ENCODE measurements at regions of chr15 and their contacts with region 1.

Region 1: DNA sequence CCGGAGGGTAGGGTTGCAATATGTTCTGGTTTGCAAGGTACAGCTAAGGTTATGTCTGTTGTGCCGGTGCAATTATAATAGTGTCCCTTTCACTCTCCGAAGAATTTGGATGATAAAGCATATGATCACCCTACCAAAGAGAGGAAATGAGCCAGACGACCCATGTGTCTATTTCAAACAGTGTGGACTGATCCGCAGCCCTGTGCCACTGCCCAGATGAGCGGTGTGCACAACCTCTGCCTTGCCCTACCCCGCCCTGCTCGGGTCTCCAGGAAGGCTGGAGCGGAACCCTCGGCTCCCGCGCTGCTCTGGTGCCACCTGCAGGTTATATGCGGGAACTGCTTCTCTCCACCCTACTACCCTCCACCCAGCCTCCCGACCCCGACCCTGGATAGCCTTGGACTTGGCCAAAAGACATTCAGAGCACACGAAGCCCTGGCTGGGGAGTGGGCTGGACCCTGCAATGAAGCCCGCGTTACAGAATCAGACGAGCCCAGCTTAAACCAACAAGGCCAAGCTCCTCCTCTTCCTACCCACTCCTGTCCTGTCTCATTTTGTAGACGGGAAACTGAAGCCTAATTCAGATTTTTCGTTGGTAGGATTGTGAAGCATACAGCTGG is 68.4 kb upstream of the CHRNB4 start:
- DNase-seq: peak; percentile 68
- H3K4me3 Mint-ChIP-seq: peak overlapping the region; percentile 40
- H3K27ac Mint-ChIP-seq: no peak overlapping the region
- H3K4me1 Mint-ChIP-seq: no peaks in the 10 kb centered on the region
- H3K27me3 Mint-ChIP-seq: peaks cover 40% of the 10 kb centered on the region
- CTCF ChIP-seq: peak; percentile 82

Region 2: GRCh38 chr15:78308422-78309032 is 400.8 kb before region 1 on chr15:
- CTCF ChIA-PET with region 1: no interaction called
- POLR2A ChIA-PET with region 1: no interaction called
- intact Hi-C with region 1: loop called (anchors 5 kb)
- DNase-seq: peak; percentile 68
- H3K4me3 Mint-ChIP-seq: no peak overlapping the region
- H3K27ac Mint-ChIP-seq: no peak overlapping the region
- H3K4me1 Mint-ChIP-seq: no peaks in the 10 kb centered on the region
- H3K27me3 Mint-ChIP-seq: no peaks in the 10 kb centered on the region
- CTCF ChIP-seq: peak; percentile 90

Region 3: GRCh38 chr15:78481917-78482316 is 227.5 kb before region 1 on chr15:
- CTCF ChIA-PET with region 1: interaction called, 4 read pairs
- POLR2A ChIA-PET with region 1: no interaction called
- intact Hi-C with region 1: loop called (anchors 10 kb)
- DNase-seq: no peak
- H3K4me3 Mint-ChIP-seq: no peak overlapping the region
- H3K27ac Mint-ChIP-seq: no peak overlapping the region
- H3K4me1 Mint-ChIP-seq: no peaks in the 10 kb centered on the region
- H3K27me3 Mint-ChIP-seq: no peaks in the 10 kb centered on the region
- CTCF ChIP-seq: no peak

Region 4: GRCh38 chr15:78618490-78618934 is 90.9 kb before region 1 on chr15:
- CTCF ChIA-PET with region 1: interaction called, 21 read pairs
- POLR2A ChIA-PET with region 1: no interaction called
- intact Hi-C with region 1: loop called (anchors 1 kb)
- DNase-seq: peak; percentile 84
- H3K4me3 Mint-ChIP-seq: no peak overlapping the region
- H3K27ac Mint-ChIP-seq: no peak overlapping the region
- H3K4me1 Mint-ChIP-seq: no peaks in the 10 kb centered on the region
- H3K27me3 Mint-ChIP-seq: peaks cover 31% of the 10 kb centered on the region
- CTCF ChIP-seq: peak; percentile 76

Region 5: GRCh38 chr15:78638658-78639314 is 70.6 kb before region 1 on chr15:
- CTCF ChIA-PET with region 1: interaction called, 88 read pairs
- POLR2A ChIA-PET with region 1: no interaction called
- intact Hi-C with region 1: loop called (anchors 1 kb)
- DNase-seq: peak; percentile 72
- H3K4me3 Mint-ChIP-seq: no peak overlapping the region
- H3K27ac Mint-ChIP-seq: no peak overlapping the region
- H3K4me1 Mint-ChIP-seq: no peaks in the 10 kb centered on the region
- H3K27me3 Mint-ChIP-seq: no peaks in the 10 kb centered on the region
- CTCF ChIP-seq: peak; percentile 63

Region 6: GRCh38 chr15:78651930-78652615 is 57.3 kb before region 1 on chr15:
- CTCF ChIA-PET with region 1: interaction called, 10 read pairs
- POLR2A ChIA-PET with region 1: no interaction called
- intact Hi-C with region 1: no loop called
- DNase-seq: no peak
- H3K4me3 Mint-ChIP-seq: no peak overlapping the region
- H3K27ac Mint-ChIP-seq: no peak overlapping the region
- H3K4me1 Mint-ChIP-seq: no peaks in the 10 kb centered on the region
- H3K27me3 Mint-ChIP-seq: no peaks in the 10 kb centered on the region
- CTCF ChIP-seq: no peak

Region 7: DNA sequence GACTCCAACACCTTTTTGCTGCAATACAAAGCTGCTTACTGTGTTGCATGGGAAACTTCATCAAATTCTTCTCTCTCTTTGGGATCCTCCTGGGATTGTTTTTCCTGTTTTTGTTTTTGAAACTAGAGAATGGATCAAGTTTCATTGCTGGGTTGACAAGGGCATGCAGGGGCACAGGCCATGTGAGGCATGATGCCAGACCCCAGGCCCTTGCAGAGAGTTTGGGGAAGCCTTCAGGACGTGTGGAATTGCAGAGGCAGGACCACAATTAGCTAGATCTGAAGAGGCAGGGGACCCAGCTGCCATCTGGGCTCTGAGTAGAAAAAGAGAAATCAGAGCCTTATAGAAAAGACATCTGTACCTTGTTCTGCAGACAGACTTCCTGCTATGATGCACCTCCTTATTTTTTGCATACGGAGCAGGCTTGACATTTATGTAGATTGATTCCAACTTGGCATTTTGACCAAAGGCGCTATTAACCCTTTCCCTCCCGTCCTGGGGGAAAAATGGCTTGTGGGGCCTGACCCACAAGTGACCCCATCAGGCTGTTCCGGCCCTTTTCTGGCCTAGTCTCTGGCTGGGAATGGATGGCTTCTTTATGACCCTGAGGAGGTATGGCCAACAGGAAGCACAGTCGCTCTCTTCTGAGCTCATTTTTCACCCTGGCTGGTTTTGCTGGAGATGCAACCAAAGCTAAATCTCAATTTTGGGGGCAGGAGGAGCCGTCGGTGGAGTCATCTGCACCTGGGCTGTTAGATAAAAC is 24.0 kb before region 1 on chr15:
- CTCF ChIA-PET with region 1: interaction called, 10 read pairs
- POLR2A ChIA-PET with region 1: no interaction called
- intact Hi-C with region 1: no loop called
- DNase-seq: no peak
- H3K4me3 Mint-ChIP-seq: no peak overlapping the region
- H3K27ac Mint-ChIP-seq: no peak overlapping the region
- H3K4me1 Mint-ChIP-seq: no peaks in the 10 kb centered on the region
- H3K27me3 Mint-ChIP-seq: no peaks in the 10 kb centered on the region
- CTCF ChIP-seq: no peak